ENCODE measurements at regions of chr3 and their contacts with region 1.

Region 1: GRCh38 chr3:116770815-116771450 is 61.4 kb downstream of the TUSC7 start:
- DNase-seq: peak; percentile 15
- H3K4me3 ChIP-seq: no peak overlapping the region
- H3K27me3 ChIP-seq: no peaks in the 10 kb centered on the region
- CTCF ChIP-seq: peak; percentile 95

Region 2: GRCh38 chr3:116102037-116102436 is 668.9 kb before region 1 on chr3:
- CTCF ChIA-PET with region 1: no interaction called
- POLR2A ChIA-PET with region 1: interaction called, 14 read pairs
- DNase-seq: no peak
- H3K4me3 ChIP-seq: no peak overlapping the region
- H3K27me3 ChIP-seq: no peaks in the 10 kb centered on the region; the same call in 1 of the 2 replicates
- CTCF ChIP-seq: no peak

Region 3: DNA sequence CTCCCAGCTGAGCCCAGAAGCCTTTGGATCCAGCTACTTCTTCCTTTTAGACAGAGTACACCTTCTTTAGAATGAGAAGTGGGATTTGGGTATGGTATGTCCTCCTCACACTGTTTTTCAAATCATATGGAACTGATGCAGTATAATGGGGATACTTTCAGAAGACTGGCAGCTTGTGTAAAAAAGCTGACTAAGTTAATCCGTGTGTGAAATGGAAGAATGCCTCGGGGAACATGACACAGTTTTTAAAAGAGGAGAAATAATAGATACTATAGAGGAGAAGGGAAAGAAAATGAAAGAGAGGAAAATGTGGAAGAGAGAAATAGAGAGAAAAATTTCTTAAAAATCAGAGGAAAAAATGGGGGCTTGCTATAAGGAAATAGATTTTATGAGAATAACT is 13.6 kb before region 1 on chr3:
- CTCF ChIA-PET with region 1: interaction called, 12 read pairs
- POLR2A ChIA-PET with region 1: no interaction called
- DNase-seq: no peak
- H3K4me3 ChIP-seq: no peak overlapping the region
- H3K27me3 ChIP-seq: no peaks in the 10 kb centered on the region
- CTCF ChIP-seq: no peak

Region 4: DNA sequence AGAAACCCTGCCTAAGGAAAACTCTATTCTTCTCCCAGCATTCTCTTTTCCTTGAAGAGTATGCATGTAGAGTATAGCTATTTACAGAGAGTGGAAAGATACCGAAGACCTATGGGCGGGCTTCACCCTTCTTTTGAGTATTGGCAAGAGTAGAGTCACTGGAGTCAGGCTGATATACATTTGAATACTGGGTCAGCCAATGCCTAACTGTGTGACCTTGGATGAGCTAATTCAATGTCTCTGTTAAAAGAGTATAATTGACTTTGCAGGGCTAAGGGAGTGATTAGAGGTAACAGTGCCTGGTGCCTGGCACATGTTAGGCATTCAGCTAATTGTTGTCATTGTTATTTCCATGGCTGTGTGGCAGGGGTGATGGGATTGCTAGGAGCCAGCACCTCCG is 14.3 kb after region 1 on chr3:
- CTCF ChIA-PET with region 1: interaction called, 11 read pairs
- POLR2A ChIA-PET with region 1: no interaction called
- DNase-seq: no peak
- H3K4me3 ChIP-seq: no peak overlapping the region
- H3K27me3 ChIP-seq: no peaks in the 10 kb centered on the region
- CTCF ChIP-seq: no peak

Measured in BJ (cell line).